Left colon (tissue), 2 donors: ENCODE measurements at regions of chr2 and their contacts with region 1.

Region 1: DNA sequence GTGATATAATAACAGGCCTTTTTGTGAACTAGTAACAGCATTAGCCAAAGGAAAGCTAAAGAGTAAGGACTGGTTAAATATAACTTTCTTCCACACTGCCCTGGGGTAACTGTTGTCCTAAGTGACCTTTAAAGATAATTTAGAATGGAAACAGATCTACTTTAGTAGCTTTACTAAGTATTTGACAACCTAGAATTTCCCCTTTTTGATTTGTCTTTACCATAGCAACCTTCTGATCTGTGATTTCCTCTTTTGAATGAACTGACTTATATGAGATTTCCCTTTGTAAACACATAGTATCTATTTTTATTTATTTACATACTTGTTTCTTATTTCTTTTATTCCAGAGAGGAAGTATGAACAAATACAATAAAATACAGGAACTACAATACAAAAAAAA is 10.5 kb upstream of the KLF7 start:
- DNase-seq: no peak
- ATAC-seq: no peak

Region 2: GRCh38 chr2:207046724-207047123 is 129.5 kb before region 1 on chr2:
- intact Hi-C with region 1: loop called in 1 of 2 experiments (anchors 10 kb)
- DNase-seq: no peak
- ATAC-seq: no peak

Region 3: GRCh38 chr2:207283356-207283755 is 107.1 kb after region 1 on chr2:
- intact Hi-C with region 1: no loop called
- DNase-seq: no peak
- ATAC-seq: no peak

Region 4: DNA sequence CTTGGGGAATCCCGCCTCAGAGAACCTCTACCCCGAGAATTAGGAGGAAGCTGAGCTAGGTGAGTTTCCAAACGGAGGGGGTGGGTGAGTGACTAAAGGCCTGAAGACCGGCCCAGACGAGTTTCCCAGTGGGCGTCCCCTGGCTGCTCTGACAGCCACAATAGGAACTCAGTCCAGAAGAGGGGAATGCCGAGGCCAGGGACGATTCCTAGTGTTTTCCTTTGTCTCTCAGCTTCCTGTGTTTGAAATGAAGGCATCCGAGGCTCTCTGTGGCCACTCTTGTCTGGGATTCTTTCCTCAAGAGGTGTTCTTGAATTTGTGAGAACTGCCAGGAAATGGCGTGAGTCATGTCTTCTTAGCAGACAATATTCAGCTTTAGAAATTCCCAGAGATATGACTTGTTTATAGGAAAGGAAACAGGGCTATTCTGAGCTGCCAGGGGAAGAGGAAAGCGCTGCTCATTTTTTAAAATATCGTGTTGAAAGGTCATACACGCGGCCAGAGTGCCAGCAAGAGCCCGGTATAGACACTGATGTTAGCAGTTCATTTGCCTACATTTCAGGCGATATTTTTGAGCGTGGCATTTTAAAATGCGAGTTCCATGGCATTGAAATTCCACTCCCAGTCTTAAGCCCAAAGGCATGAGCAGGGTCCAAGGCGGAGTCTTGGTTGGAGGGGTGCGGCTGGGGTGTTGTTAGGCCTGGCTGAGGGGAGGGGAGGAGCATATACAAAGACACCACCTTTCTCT is 158.6 kb after region 1 on chr2:
- intact Hi-C with region 1: loop called in 1 of 2 experiments (anchors 10 kb)
- DNase-seq: peak; percentile 19 to 41
- ATAC-seq: no peak